ENCODE measurements at regions of chr17 and their contacts with region 1.

Region 1: GRCh38 chr17:75289115-75289831 is at the start of gene SLC25A19:
- DNase-seq: peak; percentile 98 to 99
- ATAC-seq: peak; percentile 98 to 100 (median 99)
- H3K4me3 ChIP-seq: peak within 1 kb of the TSS; percentile 59 to 98 (median 90)
- H3K27ac ChIP-seq: peak within 1 kb of the TSS; percentile 46 to 97 (median 90)
- H3K4me1 ChIP-seq: peaks cover 0 to 42% (median 10%) of the 10 kb centered on the region in 9 donors
- H3K27me3 ChIP-seq: no peaks in the 10 kb centered on the region
- CTCF ChIP-seq: peak in 5 of 9 donors; percentile 16 to 35 (median 28)
- total RNA-seq, gene SLC25A19: 6.8 to 19.2 (median 11.3) TPM

Region 2: DNA sequence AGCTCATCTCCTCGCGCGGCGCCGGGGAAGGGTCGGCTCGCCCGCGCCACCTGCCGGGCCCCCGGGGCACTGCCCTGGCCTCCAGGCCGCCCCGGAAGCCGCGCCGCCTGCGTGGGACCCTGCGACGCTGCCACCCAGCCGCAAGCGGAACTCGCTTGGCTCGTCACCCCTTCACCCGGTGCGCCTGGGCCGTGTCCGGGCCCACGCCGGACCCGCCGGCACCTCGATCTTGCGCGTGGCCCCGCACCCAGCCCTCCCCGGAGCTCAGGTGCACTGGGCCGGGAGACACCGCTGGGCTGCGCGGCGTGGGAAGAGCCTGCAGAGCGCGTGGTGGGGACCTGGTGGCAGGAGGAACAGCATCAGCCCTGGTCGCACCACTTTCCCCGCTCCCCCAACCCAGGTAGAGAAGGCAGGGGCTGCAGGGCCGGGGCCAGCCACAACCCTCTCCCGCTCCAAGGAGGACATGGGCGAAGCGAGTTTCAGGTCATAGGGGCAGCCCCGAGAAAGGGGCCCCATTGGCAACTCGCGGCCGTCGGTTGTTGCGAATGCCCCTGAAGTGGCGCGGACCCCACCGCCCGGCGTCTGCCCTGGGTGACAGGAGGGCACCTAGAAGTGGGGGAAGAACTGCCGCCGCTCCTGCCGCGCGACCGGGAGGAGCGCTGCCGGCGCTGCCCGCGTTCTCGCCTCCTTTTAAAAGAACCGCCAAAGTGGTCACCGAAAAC is 17.9 kb before region 1 on chr17:
- intact Hi-C with region 1: loop called in 1 of 10 experiments (anchors 2 kb)
- DNase-seq: peak; percentile 78 to 83
- ATAC-seq: peak; percentile 60 to 90 (median 72)
- H3K4me3 ChIP-seq: peak overlapping the region; percentile 65 to 100 (median 96)
- H3K27ac ChIP-seq: peak overlapping the region; percentile 81 to 98 (median 91)
- H3K4me1 ChIP-seq: peaks cover 4 to 52% (median 37%) of the 10 kb centered on the region in 9 donors
- H3K27me3 ChIP-seq: no peaks in the 10 kb centered on the region
- CTCF ChIP-seq: peak; percentile 60 to 95 (median 81)

Region 3: DNA sequence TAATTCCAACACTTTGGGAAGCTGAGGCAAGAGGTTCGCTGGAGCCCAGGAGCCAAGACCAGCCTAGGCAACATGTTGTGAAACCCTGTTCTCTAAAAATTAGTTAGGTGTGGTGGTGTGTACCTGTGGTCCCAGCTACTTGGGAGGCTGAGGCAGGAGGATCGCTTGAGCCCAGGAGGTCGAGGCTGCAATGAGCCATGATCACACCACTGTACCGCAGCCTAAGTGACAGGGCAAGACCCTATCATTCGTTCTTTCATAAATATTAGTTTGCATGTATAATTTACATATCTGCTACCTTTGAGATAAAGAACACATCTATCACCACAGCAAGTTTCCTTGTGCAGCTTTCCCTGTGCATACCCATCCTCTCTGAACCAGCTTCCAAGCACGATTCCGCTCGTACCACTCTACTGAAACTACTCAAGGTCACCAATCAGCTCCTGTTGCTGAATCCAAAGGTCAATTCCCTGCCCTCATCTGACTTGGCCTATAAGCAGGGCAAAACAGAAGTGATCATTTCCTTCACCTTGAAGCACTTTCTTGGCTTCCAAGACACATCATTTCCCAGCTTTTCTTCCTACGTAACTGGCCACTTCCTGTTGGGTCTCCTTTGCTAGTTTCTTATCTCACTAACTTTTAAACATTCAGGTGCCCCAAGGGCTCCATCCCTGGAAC is 67.1 kb after region 1 on chr17:
- intact Hi-C with region 1: no loop called
- DNase-seq: no peak
- ATAC-seq: no peak
- H3K4me3 ChIP-seq: no peak overlapping the region
- H3K27ac ChIP-seq: peak overlapping the region in 1 of 10 donors; percentile 1
- H3K4me1 ChIP-seq: peaks cover 0 to 74% (median 19%) of the 10 kb centered on the region in 9 donors
- H3K27me3 ChIP-seq: no peaks in the 10 kb centered on the region
- CTCF ChIP-seq: no peak

Measured in heart right ventricle (tissue), 16 donors.